ENCODE measurements at regions of chr17 and their contacts with region 1.

Region 1: DNA sequence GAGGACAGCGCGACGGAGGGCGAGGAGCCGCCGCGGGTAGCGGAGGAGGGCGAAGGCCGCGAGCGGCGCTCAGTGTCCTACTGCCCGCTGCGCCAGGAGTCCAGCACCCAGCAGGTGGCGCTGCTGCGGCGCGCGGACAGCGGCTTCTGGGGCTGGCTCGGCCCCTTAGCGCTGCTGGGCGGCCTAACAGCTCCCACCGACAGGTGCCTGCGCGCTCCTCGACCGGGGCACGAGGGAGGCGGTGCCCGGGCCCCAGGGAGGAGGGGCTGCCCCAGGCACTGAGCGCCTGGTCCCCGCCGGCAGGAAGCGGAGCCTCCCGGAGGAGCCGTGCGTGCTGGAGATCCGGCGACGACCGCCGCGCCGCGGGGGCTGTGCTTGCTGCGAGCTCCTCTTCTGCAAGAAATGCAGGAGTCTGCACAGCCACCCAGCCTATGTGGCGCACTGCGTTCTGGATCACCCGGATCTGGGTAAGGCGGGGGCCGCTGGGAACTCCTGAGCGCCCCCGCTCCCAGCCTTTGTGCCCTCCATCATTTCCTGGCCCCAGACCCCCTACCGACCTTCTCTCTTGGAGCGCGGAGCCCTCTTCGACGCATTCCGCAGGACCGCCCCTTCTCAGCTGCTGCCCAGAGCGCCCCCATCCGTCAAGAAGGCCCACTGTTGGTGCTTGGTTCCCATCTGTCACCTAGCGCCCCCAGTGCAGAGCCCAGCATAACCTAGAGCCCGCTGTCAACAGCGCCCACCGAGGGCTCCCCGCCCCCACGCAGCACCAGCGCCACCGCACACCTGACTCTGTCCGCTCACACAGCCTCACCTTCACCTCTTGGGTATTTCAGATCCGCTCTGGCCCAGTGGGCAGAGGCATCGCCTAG is 3.7 kb downstream of the C17orf50 start:
- DNase-seq: peak; percentile 78 to 84 (median 78)
- H3K4me3 ChIP-seq: peak overlapping the region; percentile 54 to 57
- H3K4me3 Mint-ChIP-seq: peak overlapping the region; percentile 89 to 98 (median 95)
- H3K27ac ChIP-seq: peak overlapping the region; percentile 15
- H3K27ac Mint-ChIP-seq: peak overlapping the region; percentile 59 to 93 (median 83)
- H3K4me1 ChIP-seq: peaks cover 6% of the 10 kb centered on the region
- H3K4me1 Mint-ChIP-seq: peaks cover 1 to 13% (median 6%) of the 10 kb centered on the region in 4 donors
- H3K27me3 ChIP-seq: no peaks in the 10 kb centered on the region
- H3K27me3 Mint-ChIP-seq: no peaks in the 10 kb centered on the region

Region 2: DNA sequence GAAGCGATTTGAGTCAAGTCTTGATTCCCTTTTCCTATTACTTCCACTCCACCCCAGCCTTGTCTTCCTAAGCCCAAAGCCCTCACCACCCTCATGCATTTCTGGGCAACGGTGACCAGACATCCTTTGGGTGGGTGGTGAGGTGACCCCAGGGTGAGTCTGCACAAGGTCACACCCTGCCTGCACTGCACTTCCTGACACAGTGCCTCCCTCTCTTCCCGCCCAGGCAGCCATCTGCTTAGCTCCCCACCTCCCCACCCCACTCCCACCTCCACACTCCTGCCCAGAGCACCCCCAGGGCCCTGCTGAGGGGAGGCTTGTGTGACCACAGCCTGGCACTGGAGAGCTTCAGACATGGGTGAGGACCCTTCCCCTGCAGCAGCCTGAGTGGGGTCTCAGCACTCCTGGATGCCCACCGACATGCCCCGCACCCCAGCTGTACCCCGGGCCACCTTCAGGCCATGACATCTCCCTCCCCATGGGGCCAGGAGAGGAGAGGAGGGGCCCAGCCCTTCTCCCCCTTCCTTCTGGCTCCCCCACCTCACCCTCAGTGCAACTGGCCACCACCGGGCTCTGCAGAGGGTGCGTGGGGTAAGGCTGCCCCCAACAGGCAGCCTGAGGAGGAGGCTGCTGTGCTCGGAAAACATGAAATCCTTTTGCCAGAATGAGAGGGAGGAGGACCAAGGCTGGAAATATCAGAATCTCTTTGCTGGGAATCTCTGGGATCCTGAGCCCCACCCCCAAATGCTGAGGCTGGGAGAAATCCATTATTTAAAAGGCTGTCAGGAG is 871.7 kb before region 1 on chr17:
- CTCF ChIA-PET with region 1: no interaction called
- POLR2A ChIA-PET with region 1: no interaction called
- intact Hi-C with region 1: no loop called
- DNase-seq: peak in 4 of 5 donors; percentile 18 to 26 (median 22)
- H3K4me3 ChIP-seq: no peak overlapping the region
- H3K4me3 Mint-ChIP-seq: no peak overlapping the region
- H3K27ac ChIP-seq: no peak overlapping the region
- H3K27ac Mint-ChIP-seq: no peak overlapping the region
- H3K4me1 ChIP-seq: no peaks in the 10 kb centered on the region
- H3K4me1 Mint-ChIP-seq: no peaks in the 10 kb centered on the region
- H3K27me3 ChIP-seq: no peaks in the 10 kb centered on the region
- H3K27me3 Mint-ChIP-seq: peaks cover 23 to 38% of the 10 kb centered on the region in 2 donors

Region 3: DNA sequence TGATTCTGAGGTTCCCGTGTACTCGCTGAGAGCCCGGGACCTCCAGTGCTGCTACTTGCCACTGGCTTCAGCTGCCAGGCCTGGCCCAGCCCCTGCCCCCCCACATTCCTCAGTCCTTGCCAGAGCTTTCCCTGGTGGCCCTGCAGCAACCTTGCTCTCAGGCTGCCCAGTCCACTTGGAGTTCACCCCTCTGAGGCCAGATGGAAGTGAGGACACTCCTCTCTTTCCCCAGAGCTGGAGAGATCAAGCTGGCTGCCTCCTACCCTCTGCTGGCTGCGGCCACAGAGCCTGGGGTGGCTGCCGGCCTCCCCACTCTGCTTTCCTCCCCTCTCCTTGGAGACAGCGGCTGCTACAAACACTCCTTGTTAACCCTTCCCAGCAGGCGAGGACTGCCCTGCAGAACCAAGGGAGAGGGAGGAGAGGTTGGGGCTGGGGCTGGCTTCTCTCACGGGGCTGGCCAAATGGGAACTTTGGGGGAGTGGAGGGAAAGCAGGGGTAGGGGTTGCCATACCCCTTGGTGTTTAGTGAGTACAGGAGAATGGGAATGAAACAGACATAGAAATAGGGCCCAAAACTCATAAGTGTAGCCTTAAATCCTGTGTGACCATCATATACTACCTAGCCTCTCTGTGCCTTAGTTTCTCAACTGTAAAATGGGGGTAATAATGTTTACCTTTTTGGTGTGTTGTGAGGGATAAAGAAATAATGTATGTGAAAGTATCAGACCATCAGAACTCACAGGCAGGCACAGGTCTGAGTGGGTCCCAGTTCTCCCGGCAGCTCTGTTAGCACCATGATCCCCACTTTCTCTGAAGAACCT is 11.2 kb before region 1 on chr17 and contains the start of gene GAS2L2:
- CTCF ChIA-PET with region 1: interaction called, 27 read pairs
- POLR2A ChIA-PET with region 1: no interaction called
- intact Hi-C with region 1: no loop called
- DNase-seq: no peak
- H3K4me3 ChIP-seq: no peak within 1 kb of the TSS
- H3K4me3 Mint-ChIP-seq: no peak within 1 kb of the TSS
- H3K27ac ChIP-seq: no peak within 1 kb of the TSS
- H3K27ac Mint-ChIP-seq: peak within 1 kb of the TSS in 1 of 7 donors; percentile 48
- H3K4me1 ChIP-seq: no peaks in the 10 kb centered on the region
- H3K4me1 Mint-ChIP-seq: peaks cover 0 to 9% (median 2%) of the 10 kb centered on the region in 4 donors
- H3K27me3 ChIP-seq: peaks cover 22% of the 10 kb centered on the region
- H3K27me3 Mint-ChIP-seq: peaks cover 16 to 27% of the 10 kb centered on the region in 2 donors
- total RNA-seq, gene GAS2L2: 0.26 TPM in 1 of 2 experiments, not detected in the other

Region 4: GRCh38 chr17:35784895-35785294 is 20.5 kb after region 1 on chr17:
- CTCF ChIA-PET with region 1: interaction called, 18 read pairs
- POLR2A ChIA-PET with region 1: interaction called, 4 read pairs
- intact Hi-C with region 1: no loop called
- DNase-seq: no peak
- H3K4me3 ChIP-seq: no peak overlapping the region
- H3K4me3 Mint-ChIP-seq: no peak overlapping the region
- H3K27ac ChIP-seq: no peak overlapping the region
- H3K27ac Mint-ChIP-seq: no peak overlapping the region
- H3K4me1 ChIP-seq: no peaks in the 10 kb centered on the region
- H3K4me1 Mint-ChIP-seq: peaks cover 0 to 3% (median 1%) of the 10 kb centered on the region in 4 donors
- H3K27me3 ChIP-seq: no peaks in the 10 kb centered on the region
- H3K27me3 Mint-ChIP-seq: peaks cover 9 to 12% of the 10 kb centered on the region in 2 donors

Region 5: GRCh38 chr17:35808962-35809854 is 44.9 kb after region 1 on chr17 and contains the start of gene TAF15:
- CTCF ChIA-PET with region 1: interaction called, 350 read pairs
- POLR2A ChIA-PET with region 1: interaction called, 115 read pairs
- intact Hi-C with region 1: loop called (anchors 1 kb)
- DNase-seq: peak; percentile 96 to 99 (median 97)
- H3K4me3 ChIP-seq: peak within 1 kb of the TSS; percentile 67 to 96
- H3K4me3 Mint-ChIP-seq: peak within 1 kb of the TSS; percentile 95 to 98 (median 97)
- H3K27ac ChIP-seq: peak within 1 kb of the TSS; percentile 85
- H3K27ac Mint-ChIP-seq: peak within 1 kb of the TSS; percentile 93 to 99 (median 98)
- H3K4me1 ChIP-seq: peaks cover 51% of the 10 kb centered on the region
- H3K4me1 Mint-ChIP-seq: peaks cover 32 to 66% (median 48%) of the 10 kb centered on the region in 4 donors
- H3K27me3 ChIP-seq: no peaks in the 10 kb centered on the region
- H3K27me3 Mint-ChIP-seq: no peaks in the 10 kb centered on the region
- total RNA-seq, gene TAF15: 232 to 242 TPM

Region 6: GRCh38 chr17:36072431-36073121 is 308.2 kb after region 1 on chr17:
- CTCF ChIA-PET with region 1: interaction called, 11 read pairs
- POLR2A ChIA-PET with region 1: no interaction called
- intact Hi-C with region 1: no loop called
- DNase-seq: peak; percentile 28 to 44 (median 37)
- H3K4me3 ChIP-seq: no peak overlapping the region
- H3K4me3 Mint-ChIP-seq: peak overlapping the region in 3 of 8 donors; percentile 24 to 60 (median 27)
- H3K27ac ChIP-seq: no peak overlapping the region
- H3K27ac Mint-ChIP-seq: peak overlapping the region in 1 of 7 donors; percentile 4
- H3K4me1 ChIP-seq: no peaks in the 10 kb centered on the region
- H3K4me1 Mint-ChIP-seq: peaks cover 3 to 9% (median 5%) of the 10 kb centered on the region in 4 donors
- H3K27me3 ChIP-seq: no peaks in the 10 kb centered on the region
- H3K27me3 Mint-ChIP-seq: no peaks in the 10 kb centered on the region

Measured in CD4-positive, alpha-beta memory T cell (primary cell).